ENCODE measurements at regions of chr3 and their contacts with region 1.

Region 1: DNA sequence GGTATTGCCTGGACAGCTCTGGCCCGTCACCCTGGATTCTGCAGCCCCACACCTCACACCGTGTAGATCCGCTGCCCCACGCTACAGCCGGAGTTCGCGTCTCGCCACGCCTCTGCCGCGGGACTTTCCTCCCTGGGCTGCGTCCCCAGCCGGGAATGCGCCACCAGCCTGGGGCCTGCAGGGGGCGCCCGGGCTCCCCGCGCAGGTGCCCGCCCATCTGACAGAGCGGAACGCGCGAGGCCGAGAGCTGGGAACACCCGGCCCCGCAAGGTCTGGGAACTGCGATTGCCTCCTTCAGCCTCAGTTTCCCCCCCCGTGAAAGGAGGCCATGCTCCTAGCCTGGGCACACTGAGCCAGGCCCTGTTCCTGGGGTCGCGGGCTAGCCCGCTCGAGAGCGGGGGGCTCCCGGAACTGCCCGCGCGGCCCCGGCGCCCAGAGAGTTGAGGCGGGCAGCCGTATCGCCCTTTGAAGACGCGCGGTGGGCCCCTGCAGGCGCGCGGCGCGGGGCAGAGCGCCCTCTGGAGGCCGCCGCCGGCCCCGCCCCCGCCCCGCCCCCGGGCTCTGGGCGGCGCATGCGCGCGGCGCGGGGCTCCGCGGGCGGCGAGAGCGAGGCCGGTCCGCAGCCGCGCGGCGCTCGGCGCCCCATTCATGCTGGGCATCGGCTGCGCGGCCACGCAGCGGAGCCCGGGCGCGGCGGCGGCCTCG is at the start of gene PLXNA1:
- DNase-seq: peak; percentile 88
- H3K4me3 ChIP-seq: peak within 1 kb of the TSS; percentile 77
- H3K27ac ChIP-seq: peak within 1 kb of the TSS; percentile 79
- H3K4me1 ChIP-seq: peaks cover 21% of the 10 kb centered on the region
- H3K27me3 ChIP-seq: no peaks in the 10 kb centered on the region
- CTCF ChIP-seq: peak; percentile 93
- total RNA-seq, gene PLXNA1: 33.6 and 38.4 TPM in 2 replicates

Region 2: DNA sequence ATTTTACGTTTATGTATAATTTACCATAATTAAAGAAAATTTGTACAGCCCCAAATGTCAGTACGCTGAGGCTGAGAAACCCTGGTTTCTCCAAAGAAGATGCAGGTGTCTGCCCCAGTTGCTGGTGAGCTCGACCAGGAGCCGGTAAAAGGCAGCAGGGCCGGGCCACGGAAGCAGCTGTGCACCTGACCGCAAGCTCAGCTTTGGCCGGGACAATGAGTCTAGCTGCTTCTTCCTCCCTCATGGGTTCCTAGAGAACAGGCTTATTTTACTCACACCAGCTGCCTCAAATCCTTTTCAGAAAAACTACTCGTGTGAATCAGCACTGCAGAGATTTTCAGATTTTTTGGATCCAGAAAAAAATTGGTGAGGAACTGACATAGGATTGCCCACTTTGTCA is 488.9 kb before region 1 on chr3:
- CTCF ChIA-PET with region 1: no interaction called
- POLR2A ChIA-PET with region 1: no interaction called
- intact Hi-C with region 1: no loop called
- DNase-seq: no peak
- H3K4me3 ChIP-seq: no peak overlapping the region
- H3K27ac ChIP-seq: no peak overlapping the region
- H3K4me1 ChIP-seq: no peaks in the 10 kb centered on the region
- H3K27me3 ChIP-seq: no peaks in the 10 kb centered on the region
- CTCF ChIP-seq: no peak

Region 3: GRCh38 chr3:126679318-126679751 is 303.3 kb before region 1 on chr3:
- CTCF ChIA-PET with region 1: no interaction called
- POLR2A ChIA-PET with region 1: no interaction called
- intact Hi-C with region 1: loop called (anchors 10 kb)
- DNase-seq: peak; percentile 81
- H3K4me3 ChIP-seq: peak overlapping the region; percentile 7
- H3K27ac ChIP-seq: no peak overlapping the region
- H3K4me1 ChIP-seq: peaks cover 20% of the 10 kb centered on the region
- H3K27me3 ChIP-seq: no peaks in the 10 kb centered on the region
- CTCF ChIP-seq: peak; percentile 95

Region 4: GRCh38 chr3:126752303-126752842 is 230.2 kb before region 1 on chr3:
- CTCF ChIA-PET with region 1: interaction called, 5 read pairs
- POLR2A ChIA-PET with region 1: no interaction called
- intact Hi-C with region 1: loop called (anchors 5 kb)
- DNase-seq: peak; percentile 84
- H3K4me3 ChIP-seq: no peak overlapping the region
- H3K27ac ChIP-seq: no peak overlapping the region
- H3K4me1 ChIP-seq: no peaks in the 10 kb centered on the region
- H3K27me3 ChIP-seq: no peaks in the 10 kb centered on the region
- CTCF ChIP-seq: peak; percentile 93

Region 5: GRCh38 chr3:127141921-127142730 is 159.5 kb after region 1 on chr3:
- CTCF ChIA-PET with region 1: no interaction called
- POLR2A ChIA-PET with region 1: no interaction called
- intact Hi-C with region 1: no loop called
- DNase-seq: no peak
- H3K4me3 ChIP-seq: no peak overlapping the region
- H3K27ac ChIP-seq: no peak overlapping the region
- H3K4me1 ChIP-seq: no peaks in the 10 kb centered on the region
- H3K27me3 ChIP-seq: no peaks in the 10 kb centered on the region
- CTCF ChIP-seq: no peak